ENCODE measurements at regions of chr11 and their contacts with region 1.

Region 1: DNA sequence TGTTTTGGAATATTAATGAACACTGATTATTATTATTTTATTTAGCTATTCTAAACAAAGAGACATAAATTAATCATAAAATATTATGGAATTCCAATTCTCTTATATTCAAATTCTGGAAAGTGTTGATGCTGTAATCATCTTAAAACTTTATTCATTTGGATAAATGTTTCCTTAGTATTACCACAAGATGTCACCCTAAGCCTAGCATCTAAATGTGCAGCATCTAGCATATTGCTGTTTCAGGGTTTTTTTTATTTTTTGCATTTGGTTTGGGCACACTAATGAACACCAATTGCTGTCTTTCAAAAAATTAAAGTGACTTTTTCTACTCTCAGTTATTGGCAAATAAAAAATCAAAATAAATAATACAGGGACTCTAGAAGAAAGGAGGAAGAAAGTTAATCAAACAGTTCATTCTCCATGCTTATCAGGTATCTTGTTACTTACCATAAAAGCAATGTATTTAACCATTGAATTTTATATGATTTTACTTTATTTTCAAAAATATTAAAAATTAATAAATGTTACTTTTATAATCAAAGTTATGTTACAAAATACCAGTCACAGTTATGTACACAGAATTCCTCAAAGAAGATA is 31.8 kb downstream of the DLG2 start:
- DNase-seq: peak in 1 of 2 experiments; percentile 62
- H3K4me3 ChIP-seq: no peak overlapping the region
- H3K4me3 Mint-ChIP-seq: no peak overlapping the region
- H3K27ac Mint-ChIP-seq: no peak overlapping the region
- H3K4me1 ChIP-seq: no peaks in the 10 kb centered on the region
- H3K4me1 Mint-ChIP-seq: peaks cover 6% of the 10 kb centered on the region
- H3K27me3 ChIP-seq: peaks cover 2% of the 10 kb centered on the region; the same call in 1 of the 2 replicates
- H3K27me3 Mint-ChIP-seq: peaks cover 4% of the 10 kb centered on the region
- CTCF ChIP-seq: peak; percentile 69 to 83

Region 2: GRCh38 chr11:84722580-84723108 is 872.7 kb before region 1 on chr11:
- CTCF ChIA-PET with region 1: no interaction called
- POLR2A ChIA-PET with region 1: no interaction called
- intact Hi-C with region 1: loop called (anchors 2 kb)
- DNase-seq: no peak
- H3K4me3 ChIP-seq: no peak overlapping the region
- H3K4me3 Mint-ChIP-seq: no peak overlapping the region
- H3K27ac Mint-ChIP-seq: no peak overlapping the region
- H3K4me1 ChIP-seq: no peaks in the 10 kb centered on the region
- H3K4me1 Mint-ChIP-seq: no peaks in the 10 kb centered on the region
- H3K27me3 ChIP-seq: peaks cover 3% of the 10 kb centered on the region; the same call in 1 of the 2 replicates
- H3K27me3 Mint-ChIP-seq: peaks cover 21% of the 10 kb centered on the region
- CTCF ChIP-seq: no peak

Region 3: GRCh38 chr11:85464283-85464682 is 131.1 kb before region 1 on chr11:
- CTCF ChIA-PET with region 1: interaction called, 3 read pairs
- POLR2A ChIA-PET with region 1: no interaction called
- intact Hi-C with region 1: loop called (anchors 1 kb)
- DNase-seq: no peak
- H3K4me3 ChIP-seq: no peak overlapping the region
- H3K4me3 Mint-ChIP-seq: no peak overlapping the region
- H3K27ac Mint-ChIP-seq: no peak overlapping the region
- H3K4me1 ChIP-seq: no peaks in the 10 kb centered on the region
- H3K4me1 Mint-ChIP-seq: peaks cover 7% of the 10 kb centered on the region
- H3K27me3 ChIP-seq: no peaks in the 10 kb centered on the region; the same call in 1 of the 2 replicates
- H3K27me3 Mint-ChIP-seq: peaks cover 8% of the 10 kb centered on the region
- CTCF ChIP-seq: peak in 1 of 2 experiments; percentile 37

Region 4: DNA sequence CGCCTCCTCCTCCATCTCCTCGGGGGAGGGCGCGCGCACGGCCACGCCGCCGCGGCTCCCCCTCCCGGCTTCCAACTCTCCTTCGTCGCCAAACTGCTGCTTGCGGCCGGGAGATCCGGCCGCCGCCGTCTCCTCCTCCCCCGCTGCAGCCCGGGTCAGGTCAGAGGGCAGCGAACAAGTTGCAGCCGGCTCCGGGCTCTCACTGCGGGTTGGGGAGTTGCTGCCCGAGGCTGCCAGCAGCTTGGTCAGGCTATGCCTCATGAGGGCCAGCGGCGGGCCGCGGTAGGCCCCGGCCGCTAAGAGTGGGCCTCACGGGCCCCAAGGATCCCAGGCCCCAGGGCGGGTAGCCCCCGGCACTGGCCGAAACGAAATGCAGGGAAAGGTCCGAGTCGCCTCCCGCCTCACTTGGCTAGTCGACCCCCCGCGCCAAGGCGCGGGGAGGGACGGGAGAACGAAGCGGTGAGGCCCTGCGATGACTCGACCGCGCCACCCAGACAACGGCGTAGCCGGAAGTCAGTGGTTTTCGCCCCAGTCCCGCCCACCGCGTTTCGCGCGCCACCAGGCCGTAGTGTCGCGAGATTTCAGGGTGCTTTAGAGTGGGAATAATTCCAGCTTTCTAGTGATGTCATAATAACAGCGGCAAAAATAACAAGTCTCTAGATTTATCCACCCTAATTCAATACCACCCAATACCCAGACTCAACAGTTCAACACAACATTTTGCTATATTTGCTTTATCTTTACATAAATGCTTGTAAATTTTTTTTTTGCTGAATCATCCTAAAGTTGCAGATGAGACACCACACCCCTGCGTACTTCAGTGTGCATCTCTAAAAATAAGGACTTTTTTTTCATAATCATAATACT is 69.5 kb after region 1 on chr11 and contains the start of gene CREBZF:
- CTCF ChIA-PET with region 1: no interaction called
- POLR2A ChIA-PET with region 1: no interaction called
- intact Hi-C with region 1: loop called (anchors 1 kb)
- DNase-seq: peak; percentile 99 to 100
- H3K4me3 ChIP-seq: peak within 1 kb of the TSS; percentile 91
- H3K4me3 Mint-ChIP-seq: peak within 1 kb of the TSS; percentile 91
- H3K27ac Mint-ChIP-seq: peak within 1 kb of the TSS; percentile 87
- H3K4me1 ChIP-seq: 0 out of 2 replicates have a peak, but pooled peaks cover 9% of the 10 kb centered on the region
- H3K4me1 Mint-ChIP-seq: peaks cover 25% of the 10 kb centered on the region
- H3K27me3 ChIP-seq: no peaks in the 10 kb centered on the region
- H3K27me3 Mint-ChIP-seq: no peaks in the 10 kb centered on the region
- CTCF ChIP-seq: no peak
- total RNA-seq, gene CREBZF: 99.4 and 101 TPM in 2 replicates

Region 5: GRCh38 chr11:85826116-85826855 is 230.9 kb after region 1 on chr11:
- CTCF ChIA-PET with region 1: no interaction called
- POLR2A ChIA-PET with region 1: no interaction called
- intact Hi-C with region 1: loop called (anchors 1 kb)
- DNase-seq: peak; percentile 78 to 80
- H3K4me3 ChIP-seq: no peak overlapping the region
- H3K4me3 Mint-ChIP-seq: peak overlapping the region; percentile 14
- H3K27ac Mint-ChIP-seq: peak overlapping the region; percentile 17
- H3K4me1 ChIP-seq: peaks cover 47% of the 10 kb centered on the region
- H3K4me1 Mint-ChIP-seq: peaks cover 37% of the 10 kb centered on the region
- H3K27me3 ChIP-seq: no peaks in the 10 kb centered on the region
- H3K27me3 Mint-ChIP-seq: no peaks in the 10 kb centered on the region
- CTCF ChIP-seq: peak; percentile 75 to 90

Region 6: DNA sequence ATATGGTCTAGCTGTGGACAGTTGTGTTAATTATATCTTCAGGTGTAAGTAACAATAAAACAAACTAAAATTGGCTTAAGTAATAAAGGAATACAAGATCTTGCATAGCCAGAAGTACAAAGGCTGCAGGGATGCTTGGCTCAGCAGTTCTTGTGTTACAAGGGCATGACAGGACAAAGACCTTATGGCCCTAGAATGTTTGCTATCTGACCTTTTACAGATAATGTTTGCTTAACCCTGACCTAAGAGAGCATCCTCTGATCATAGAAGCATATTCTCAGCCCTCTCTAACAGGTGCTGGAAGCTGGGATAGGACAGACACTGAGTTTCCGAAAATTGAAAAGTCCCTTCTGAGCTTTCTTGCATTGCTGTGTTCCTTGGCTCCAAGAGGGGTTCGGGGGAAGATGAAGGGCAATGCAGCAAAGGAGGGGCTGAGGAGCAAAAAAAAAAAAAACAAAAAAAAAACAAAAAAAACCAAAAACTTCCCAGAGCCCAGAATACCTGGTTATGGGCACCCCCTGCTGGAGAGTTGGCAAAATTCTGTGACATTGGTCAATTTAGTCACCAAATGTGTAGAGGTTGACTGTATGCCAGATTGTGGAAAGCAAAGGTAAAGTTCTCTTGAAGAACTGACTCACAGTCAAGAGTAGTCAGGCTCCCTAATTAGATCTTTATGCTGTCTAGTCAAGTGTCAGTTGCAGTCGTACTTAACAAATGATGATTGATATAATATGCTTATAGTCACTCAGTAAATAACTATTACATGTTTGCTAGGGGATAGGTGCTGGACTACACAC is 696.3 kb after region 1 on chr11:
- CTCF ChIA-PET with region 1: no interaction called
- POLR2A ChIA-PET with region 1: no interaction called
- intact Hi-C with region 1: loop called (anchors 1 kb)
- DNase-seq: peak; percentile 63 to 82
- H3K4me3 ChIP-seq: no peak overlapping the region
- H3K4me3 Mint-ChIP-seq: no peak overlapping the region
- H3K27ac Mint-ChIP-seq: no peak overlapping the region
- H3K4me1 ChIP-seq: 0 out of 2 replicates have a peak, but pooled peaks cover 4% of the 10 kb centered on the region
- H3K4me1 Mint-ChIP-seq: no peaks in the 10 kb centered on the region
- H3K27me3 ChIP-seq: no peaks in the 10 kb centered on the region
- H3K27me3 Mint-ChIP-seq: no peaks in the 10 kb centered on the region
- CTCF ChIP-seq: peak; percentile 92 to 98

Measured in Caco-2 (cell line).